ENCODE measurements at regions of chr7 and their contacts with region 1.

Region 1: GRCh38 chr7:151631968-151632749 is 112.5 kb upstream of the RHEB start:
- DNase-seq: peak; percentile 91
- ATAC-seq: peak; percentile 72
- H3K4me3 Mint-ChIP-seq: peak overlapping the region; percentile 92
- H3K27ac Mint-ChIP-seq: peak overlapping the region; percentile 98
- H3K4me1 Mint-ChIP-seq: peaks cover 22% of the 10 kb centered on the region
- H3K27me3 Mint-ChIP-seq: no peaks in the 10 kb centered on the region

Region 2: DNA sequence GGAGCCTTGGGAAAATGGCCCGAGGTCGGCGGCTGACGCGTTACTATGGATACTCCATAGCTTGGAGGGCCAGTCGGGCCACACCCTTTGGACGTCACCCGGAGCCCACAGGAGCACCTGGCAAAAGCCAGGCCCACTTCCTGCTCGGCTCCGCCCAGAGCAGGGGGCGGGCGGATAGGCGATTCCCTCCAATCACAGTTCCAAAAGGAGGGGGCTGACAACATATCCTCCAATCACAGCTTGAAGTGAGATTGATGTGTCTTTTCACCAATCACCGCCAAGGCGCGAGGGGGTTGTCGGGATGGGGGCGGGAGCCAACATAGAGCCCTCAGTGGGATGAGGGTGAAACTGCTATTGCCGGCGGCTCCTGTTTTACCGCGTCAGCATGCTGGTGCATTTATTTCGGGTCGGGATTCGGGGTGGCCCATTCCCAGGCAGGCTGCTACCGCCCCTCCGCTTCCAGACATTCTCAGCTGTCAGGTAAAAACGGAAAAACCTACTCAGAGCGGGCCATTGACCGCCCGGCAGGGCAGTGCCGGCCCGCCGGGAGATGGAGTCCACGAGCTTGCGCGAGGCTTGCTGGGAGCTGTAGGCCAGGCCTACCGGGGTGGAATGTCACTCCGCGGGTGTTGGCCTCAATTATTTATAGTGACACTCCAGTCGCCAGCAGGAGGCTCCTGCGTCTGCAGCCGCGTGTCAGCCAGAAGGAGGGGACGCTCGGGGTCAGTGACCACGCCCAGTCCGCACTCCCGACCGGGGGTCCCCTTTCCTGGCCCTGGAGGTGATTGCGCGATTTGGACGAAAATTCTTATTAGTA is 603.8 kb before region 1 on chr7 and contains the start of gene ABCB8:
- CTCF ChIA-PET with region 1: no interaction called
- POLR2A ChIA-PET with region 1: no interaction called
- intact Hi-C with region 1: loop called in 1 of 2 experiments (anchors 5 kb)
- DNase-seq: peak; percentile 99
- ATAC-seq: peak; percentile 95
- H3K4me3 Mint-ChIP-seq: peak within 1 kb of the TSS; percentile 97
- H3K27ac Mint-ChIP-seq: peak within 1 kb of the TSS; percentile 95
- H3K4me1 Mint-ChIP-seq: peaks cover 23% of the 10 kb centered on the region
- H3K27me3 Mint-ChIP-seq: no peaks in the 10 kb centered on the region
- total RNA-seq, gene ABCB8: 41.9 to 44.5 TPM

Region 3: GRCh38 chr7:151351027-151351426 is 281.1 kb before region 1 on chr7:
- CTCF ChIA-PET with region 1: no interaction called
- POLR2A ChIA-PET with region 1: no interaction called
- intact Hi-C with region 1: loop called in 1 of 2 experiments (anchors 1 kb)
- DNase-seq: peak; percentile 79
- ATAC-seq: peak; percentile 34
- H3K4me3 Mint-ChIP-seq: peak overlapping the region; percentile 66
- H3K27ac Mint-ChIP-seq: peak overlapping the region; percentile 95
- H3K4me1 Mint-ChIP-seq: peaks cover 48% of the 10 kb centered on the region
- H3K27me3 Mint-ChIP-seq: no peaks in the 10 kb centered on the region

Region 4: GRCh38 chr7:151759591-151760042 is 127.5 kb after region 1 on chr7:
- CTCF ChIA-PET with region 1: interaction called, 25 read pairs
- POLR2A ChIA-PET with region 1: no interaction called
- intact Hi-C with region 1: no loop called
- DNase-seq: peak; percentile 75
- ATAC-seq: peak; percentile 40
- H3K4me3 Mint-ChIP-seq: no peak overlapping the region
- H3K27ac Mint-ChIP-seq: no peak overlapping the region
- H3K4me1 Mint-ChIP-seq: peaks cover 25% of the 10 kb centered on the region
- H3K27me3 Mint-ChIP-seq: no peaks in the 10 kb centered on the region

Region 5: GRCh38 chr7:151876899-151877777 is 245.0 kb after region 1 on chr7 and contains the start of gene PRKAG2:
- CTCF ChIA-PET with region 1: interaction called, 4 read pairs
- POLR2A ChIA-PET with region 1: no interaction called
- intact Hi-C with region 1: loop called (anchors 1 to 5 kb)
- DNase-seq: peak; percentile 81
- ATAC-seq: peak; percentile 50
- H3K4me3 Mint-ChIP-seq: peak within 1 kb of the TSS; percentile 87
- H3K27ac Mint-ChIP-seq: peak within 1 kb of the TSS; percentile 82
- H3K4me1 Mint-ChIP-seq: peaks cover 14% of the 10 kb centered on the region
- H3K27me3 Mint-ChIP-seq: no peaks in the 10 kb centered on the region
- total RNA-seq, gene PRKAG2: 19.6 to 21.5 TPM

Region 6: GRCh38 chr7:152463709-152464311 is 831.7 kb after region 1 on chr7:
- CTCF ChIA-PET with region 1: no interaction called
- POLR2A ChIA-PET with region 1: no interaction called
- intact Hi-C with region 1: loop called in 1 of 2 experiments (anchors 5 kb)
- DNase-seq: peak; percentile 100
- ATAC-seq: peak; percentile 95
- H3K4me3 Mint-ChIP-seq: peak overlapping the region; percentile 88
- H3K27ac Mint-ChIP-seq: no peak overlapping the region
- H3K4me1 Mint-ChIP-seq: peaks cover 5% of the 10 kb centered on the region
- H3K27me3 Mint-ChIP-seq: no peaks in the 10 kb centered on the region